ENCODE measurements at regions of chr14 and their contacts with region 1.

Region 1: GRCh38 chr14:34930591-34931091 is 52.2 kb upstream of the SRP54 start:
- DNase-seq: no peak
- H3K4me3 Mint-ChIP-seq: peak overlapping the region; percentile 59
- H3K27ac Mint-ChIP-seq: peak overlapping the region; percentile 94
- H3K4me1 Mint-ChIP-seq: peaks cover 35% of the 10 kb centered on the region
- H3K27me3 Mint-ChIP-seq: no peaks in the 10 kb centered on the region

Region 2: DNA sequence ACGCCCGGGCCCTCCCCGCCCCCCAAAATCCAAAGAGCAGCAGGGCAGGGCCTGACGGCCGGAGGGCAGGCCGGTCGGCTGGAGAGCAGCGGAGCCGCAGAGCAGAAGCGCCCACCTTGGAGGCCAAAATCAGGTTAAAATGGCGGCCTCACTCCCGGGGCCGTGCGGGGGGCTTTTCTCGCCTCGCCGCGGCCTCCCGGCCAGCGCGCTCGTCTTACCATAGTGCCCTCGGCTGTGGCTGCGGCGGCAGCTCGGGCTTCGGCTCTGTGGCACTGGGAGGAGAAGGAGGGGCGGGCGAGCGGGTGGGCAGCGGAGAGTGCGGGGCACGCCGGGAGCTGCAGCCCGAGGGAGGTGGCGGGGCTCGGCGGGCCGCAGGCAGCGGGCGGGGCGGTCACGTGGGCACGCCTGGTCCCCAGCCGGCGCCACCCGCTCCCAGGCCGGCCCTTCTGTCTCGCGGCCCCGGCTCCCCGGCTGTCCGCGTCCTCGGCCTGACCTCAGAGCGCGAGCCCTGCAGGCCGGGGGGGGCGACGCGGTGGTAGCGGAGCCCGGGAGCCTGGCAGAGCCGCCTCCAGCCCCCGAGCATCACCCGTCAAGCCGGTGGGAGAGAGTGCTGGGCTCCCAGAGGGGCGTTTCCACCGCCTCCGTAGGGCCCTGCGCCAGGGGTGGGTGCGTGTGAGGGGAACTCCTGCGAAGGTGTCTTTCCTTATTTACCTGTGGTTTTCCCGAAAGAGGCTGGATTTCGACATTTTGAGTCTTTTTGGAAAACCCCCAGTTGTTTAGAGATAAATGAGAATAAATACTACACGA is 216.1 kb before region 1 on chr14 and contains the start of gene CFL2:
- intact Hi-C with region 1: loop called (anchors 1 kb)
- DNase-seq: peak; percentile 57
- H3K4me3 Mint-ChIP-seq: peak within 1 kb of the TSS; percentile 89
- H3K27ac Mint-ChIP-seq: peak within 1 kb of the TSS; percentile 90
- H3K4me1 Mint-ChIP-seq: peaks cover 28% of the 10 kb centered on the region
- H3K27me3 Mint-ChIP-seq: peaks cover 16% of the 10 kb centered on the region
- total RNA-seq, gene CFL2: 7.1 and 8.4 TPM in 2 replicates

Region 3: GRCh38 chr14:34964977-34965764 is 34.5 kb after region 1 on chr14:
- intact Hi-C with region 1: no loop called
- DNase-seq: no peak
- H3K4me3 Mint-ChIP-seq: no peak overlapping the region
- H3K27ac Mint-ChIP-seq: no peak overlapping the region
- H3K4me1 Mint-ChIP-seq: peaks cover 19% of the 10 kb centered on the region
- H3K27me3 Mint-ChIP-seq: no peaks in the 10 kb centered on the region

Measured in activated T-helper 2 cell treated with anti-CD3 and anti-CD28 coated beads, Interferon-gamma antibody, Interleukin-2, Interleukin-4, amounts not matched to agents 10 μg/mL and 5 μg/mL and 100 μg/mL, durations not matched to agents 14 hours and 24 hours and 36 hours (primary cell).